ENCODE measurements at regions of chr2 and their contacts with region 1.

Region 1: GRCh38 chr2:85939131-85939530 is 50.3 kb upstream of the ST3GAL5 start:
- DNase-seq: no peak
- H3K4me3 Mint-ChIP-seq: no peak overlapping the region
- H3K27ac Mint-ChIP-seq: no peak overlapping the region
- H3K4me1 Mint-ChIP-seq: peaks cover 7% of the 10 kb centered on the region
- H3K27me3 Mint-ChIP-seq: peaks cover 12% of the 10 kb centered on the region

Region 2: DNA sequence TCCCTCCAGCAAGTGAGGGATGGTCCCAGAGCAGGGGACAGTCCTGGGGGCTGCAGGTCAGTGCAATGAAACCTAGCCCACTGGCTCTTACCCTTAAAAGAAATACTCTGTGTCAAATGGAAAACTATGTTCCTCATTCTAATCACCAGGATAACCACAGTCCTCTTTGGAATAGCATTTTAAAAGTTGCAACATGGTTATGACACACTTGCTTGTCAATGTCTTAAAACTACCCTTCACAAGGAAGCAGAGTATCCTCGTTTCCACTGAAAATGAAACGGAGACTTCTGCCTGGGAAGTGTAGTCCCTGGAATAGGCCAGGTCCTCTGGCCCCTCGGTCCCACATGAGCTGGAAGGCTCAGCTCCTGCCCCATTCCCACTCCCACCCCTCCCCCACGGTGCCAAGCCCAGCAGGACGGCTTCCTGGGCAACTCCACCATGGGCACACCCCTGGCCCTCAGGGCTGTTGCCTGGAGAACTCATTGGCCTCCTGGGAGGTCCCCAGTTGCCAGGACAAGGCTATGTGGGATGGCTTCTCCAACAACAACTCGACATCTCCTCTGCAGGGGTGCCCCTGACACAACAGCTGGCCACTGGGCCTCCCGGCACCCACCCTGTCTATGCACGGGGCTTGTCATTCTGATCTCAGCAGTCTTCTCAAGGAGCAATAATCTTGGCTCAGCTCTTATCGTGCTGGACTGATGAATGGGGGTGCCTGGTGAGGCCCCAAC is 12.0 kb before region 1 on chr2:
- CTCF ChIA-PET with region 1: interaction called, 13 read pairs
- POLR2A ChIA-PET with region 1: no interaction called
- DNase-seq: no peak
- H3K4me3 Mint-ChIP-seq: no peak overlapping the region
- H3K27ac Mint-ChIP-seq: no peak overlapping the region
- H3K4me1 Mint-ChIP-seq: peaks cover 29% of the 10 kb centered on the region
- H3K27me3 Mint-ChIP-seq: peaks cover 3% of the 10 kb centered on the region

Measured in activated CD4-positive, alpha-beta T cell treated with anti-CD3 and anti-CD28 coated beads, Interleukin-2, amount 10 ng/mL, durations not matched to agents 7 days and 5 days (primary cell).